IMR-90 (cell line): ENCODE measurements at regions of chr1 and their contacts with region 1.

Region 1: GRCh38 chr1:160193091-160193819 is 2.9 kb downstream of the CASQ1 start:
- DNase-seq: peak; percentile 87
- ATAC-seq: peak; percentile 97
- H3K4me3 ChIP-seq: no peak overlapping the region
- H3K27ac ChIP-seq: no peak overlapping the region
- H3K4me1 ChIP-seq: peaks cover 4% of the 10 kb centered on the region
- H3K27me3 ChIP-seq: peaks cover 3% of the 10 kb centered on the region; the same call in 1 of the 2 replicates
- CTCF ChIP-seq: peak; percentile 98
- POLR2A ChIP-seq: no peak
- RAD21 ChIP-seq: peak; percentile 97

Region 2: GRCh38 chr1:160205242-160206035 is 12.2 kb after region 1 on chr1 and contains the start of gene PEA15:
- CTCF ChIA-PET with region 1: interaction called, 10 read pairs
- POLR2A ChIA-PET with region 1: interaction called, 13 read pairs
- dilution Hi-C with region 1: no loop called
- in situ Hi-C with region 1: no loop called
- intact Hi-C with region 1: no loop called
- DNase-seq: peak; percentile 35
- ATAC-seq: peak; percentile 70
- H3K4me3 ChIP-seq: peak within 1 kb of the TSS; percentile 98
- H3K27ac ChIP-seq: peak within 1 kb of the TSS; percentile 82
- H3K4me1 ChIP-seq: peaks cover 42% of the 10 kb centered on the region
- H3K27me3 ChIP-seq: no peaks in the 10 kb centered on the region; the same call in 1 of the 2 replicates
- CTCF ChIP-seq: no peak
- POLR2A ChIP-seq: peak; percentile 73
- RAD21 ChIP-seq: no peak
- total RNA-seq, gene PEA15: 265 and 296 TPM in 2 replicates

Region 3: GRCh38 chr1:160244209-160244608 is 51.0 kb after region 1 on chr1:
- CTCF ChIA-PET with region 1: interaction called, 7 read pairs
- POLR2A ChIA-PET with region 1: no interaction called
- dilution Hi-C with region 1: no loop called
- in situ Hi-C with region 1: no loop called
- intact Hi-C with region 1: loop called (anchors 5 kb)
- DNase-seq: no peak
- ATAC-seq: no peak
- H3K4me3 ChIP-seq: no peak overlapping the region
- H3K27ac ChIP-seq: no peak overlapping the region
- H3K4me1 ChIP-seq: peaks cover 2% of the 10 kb centered on the region; the same call in 1 of the 2 replicates
- H3K27me3 ChIP-seq: no peaks in the 10 kb centered on the region
- CTCF ChIP-seq: no peak
- POLR2A ChIP-seq: no peak
- RAD21 ChIP-seq: no peak

Region 4: DNA sequence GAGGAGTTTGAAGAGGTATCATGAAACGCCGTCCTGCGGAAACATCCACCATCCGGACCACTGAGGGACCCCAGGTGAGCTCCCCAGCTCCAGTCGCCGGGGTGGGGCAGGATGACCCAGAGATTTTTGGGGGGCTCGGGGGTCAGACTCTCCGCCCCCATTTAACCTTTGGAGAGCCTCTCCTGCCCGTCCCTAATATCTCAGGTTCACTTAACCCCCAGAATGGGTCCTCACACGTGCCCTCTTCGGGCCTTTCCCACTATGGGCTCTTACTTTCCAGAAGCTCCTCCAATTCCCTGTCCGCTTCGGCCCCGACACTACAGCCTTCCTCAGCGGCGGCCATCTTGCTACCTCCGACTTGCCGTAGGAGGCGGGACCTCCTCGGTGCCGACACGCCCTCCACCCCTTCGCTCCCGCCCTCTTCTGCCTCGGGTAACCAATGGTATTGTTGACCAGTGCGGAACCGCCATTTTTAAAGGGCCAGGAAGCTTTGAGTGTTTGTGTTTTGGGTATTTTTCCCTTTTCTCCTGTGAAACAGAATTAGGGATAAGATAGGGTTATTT is 91.6 kb after region 1 on chr1 and contains the start of gene PEX19:
- CTCF ChIA-PET with region 1: interaction called, 6 read pairs
- POLR2A ChIA-PET with region 1: no interaction called
- dilution Hi-C with region 1: no loop called
- in situ Hi-C with region 1: no loop called
- intact Hi-C with region 1: loop called (anchors 2 kb)
- DNase-seq: peak; percentile 94
- ATAC-seq: peak; percentile 99
- H3K4me3 ChIP-seq: peak within 1 kb of the TSS; percentile 59
- H3K27ac ChIP-seq: peak within 1 kb of the TSS; percentile 68
- H3K4me1 ChIP-seq: peaks cover 3% of the 10 kb centered on the region; the same call in 1 of the 2 replicates
- H3K27me3 ChIP-seq: no peaks in the 10 kb centered on the region
- CTCF ChIP-seq: no peak
- POLR2A ChIP-seq: 0 out of 2 replicates have a peak, but pooled peaks have one; percentile 31
- RAD21 ChIP-seq: no peak
- total RNA-seq, gene PEX19: 43.3 and 67.7 TPM in 2 replicates

Region 5: GRCh38 chr1:160300173-160300572 is 106.9 kb after region 1 on chr1:
- CTCF ChIA-PET with region 1: no interaction called
- POLR2A ChIA-PET with region 1: no interaction called
- dilution Hi-C with region 1: no loop called
- in situ Hi-C with region 1: no loop called
- intact Hi-C with region 1: no loop called
- DNase-seq: no peak
- ATAC-seq: no peak
- H3K4me3 ChIP-seq: no peak overlapping the region
- H3K27ac ChIP-seq: no peak overlapping the region
- H3K4me1 ChIP-seq: no peaks in the 10 kb centered on the region
- H3K27me3 ChIP-seq: no peaks in the 10 kb centered on the region
- CTCF ChIP-seq: no peak
- POLR2A ChIP-seq: no peak
- RAD21 ChIP-seq: no peak

Region 6: DNA sequence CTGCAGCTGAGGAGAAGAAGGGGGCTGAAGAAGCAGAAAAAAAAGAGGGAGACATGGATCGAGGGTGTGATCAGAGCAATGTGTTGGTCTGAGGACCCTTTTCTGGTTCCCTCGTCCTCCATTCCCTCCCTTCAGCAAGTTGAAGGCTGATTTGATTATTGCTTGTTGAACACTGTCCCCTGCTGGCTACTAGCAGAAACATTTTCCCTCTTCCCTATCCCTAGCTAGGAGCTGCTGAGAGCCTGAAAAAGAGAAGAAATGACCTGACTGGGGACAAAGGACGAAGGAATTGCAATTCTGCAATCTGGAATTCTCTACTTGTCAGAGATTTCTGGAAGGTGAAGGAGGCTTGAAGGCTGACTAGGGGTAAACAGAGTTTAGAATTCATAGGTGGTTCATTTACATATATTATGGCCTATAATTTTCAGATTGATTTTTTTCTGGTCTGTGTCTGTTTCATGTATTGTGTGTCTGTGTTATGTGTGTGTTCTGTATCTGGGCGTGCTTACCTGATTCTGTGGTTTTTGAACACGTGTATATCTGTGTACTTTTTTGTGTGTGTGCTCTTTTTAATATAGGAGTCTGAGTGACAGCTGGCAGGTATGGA is 183.4 kb after region 1 on chr1:
- CTCF ChIA-PET with region 1: interaction called, 5 read pairs
- POLR2A ChIA-PET with region 1: no interaction called
- dilution Hi-C with region 1: no loop called
- in situ Hi-C with region 1: no loop called
- intact Hi-C with region 1: loop called (anchors 1 kb)
- DNase-seq: peak; percentile 72
- ATAC-seq: peak; percentile 86
- H3K4me3 ChIP-seq: no peak overlapping the region
- H3K27ac ChIP-seq: no peak overlapping the region
- H3K4me1 ChIP-seq: no peaks in the 10 kb centered on the region
- H3K27me3 ChIP-seq: peaks cover 10% of the 10 kb centered on the region; the same call in 1 of the 2 replicates
- CTCF ChIP-seq: peak; percentile 93
- POLR2A ChIP-seq: no peak; the same call in 1 of the 2 replicates
- RAD21 ChIP-seq: peak; percentile 92